ENCODE measurements at regions of chr4 and their contacts with region 1.

Region 1: DNA sequence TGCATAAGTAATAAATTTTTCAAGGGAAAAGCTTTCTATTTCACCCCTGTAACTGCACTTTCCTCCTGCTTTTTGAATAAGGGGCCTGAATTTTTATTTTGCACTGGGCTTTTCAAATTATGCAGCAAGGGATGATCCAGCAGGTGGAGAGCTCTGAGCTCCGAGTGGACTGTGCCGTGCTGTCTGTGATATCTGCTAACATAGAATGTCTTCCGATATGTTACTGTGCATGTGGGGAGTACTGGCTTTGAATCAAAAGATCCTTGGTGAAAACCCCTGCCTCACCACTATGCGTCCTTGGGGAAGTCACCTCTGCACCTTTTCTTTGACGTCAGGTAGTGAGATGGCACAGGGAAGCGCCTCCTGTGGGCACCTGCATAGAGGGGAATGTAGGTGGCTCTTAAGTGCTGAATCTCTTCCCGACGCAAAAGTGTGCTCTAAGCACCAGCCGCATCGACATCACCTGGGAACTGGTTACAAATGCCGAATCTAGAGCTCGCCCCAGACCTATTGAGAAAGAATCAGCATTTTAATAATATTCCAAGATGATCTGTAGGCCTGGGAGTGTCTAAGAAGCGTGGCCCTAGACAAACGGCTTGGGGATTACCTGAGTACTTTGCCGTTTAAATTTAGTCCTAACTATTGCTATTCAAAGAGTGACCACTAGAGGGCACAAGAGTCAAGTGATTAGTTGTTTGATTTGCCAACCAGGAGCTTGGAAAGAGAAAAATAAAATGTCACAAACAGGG is 19.2 kb upstream of the WFS1 start:
- DNase-seq: no peak
- ATAC-seq: peak in 3 of 4 donors; percentile 44 to 66 (median 64)
- H3K4me3 ChIP-seq: no peak overlapping the region
- H3K27ac ChIP-seq: no peak overlapping the region
- H3K4me1 ChIP-seq: no peaks in the 10 kb centered on the region
- H3K27me3 ChIP-seq: peaks cover 0 to 34% (median 7%) of the 10 kb centered on the region in 3 donors
- CTCF ChIP-seq: peak; percentile 87

Region 2: DNA sequence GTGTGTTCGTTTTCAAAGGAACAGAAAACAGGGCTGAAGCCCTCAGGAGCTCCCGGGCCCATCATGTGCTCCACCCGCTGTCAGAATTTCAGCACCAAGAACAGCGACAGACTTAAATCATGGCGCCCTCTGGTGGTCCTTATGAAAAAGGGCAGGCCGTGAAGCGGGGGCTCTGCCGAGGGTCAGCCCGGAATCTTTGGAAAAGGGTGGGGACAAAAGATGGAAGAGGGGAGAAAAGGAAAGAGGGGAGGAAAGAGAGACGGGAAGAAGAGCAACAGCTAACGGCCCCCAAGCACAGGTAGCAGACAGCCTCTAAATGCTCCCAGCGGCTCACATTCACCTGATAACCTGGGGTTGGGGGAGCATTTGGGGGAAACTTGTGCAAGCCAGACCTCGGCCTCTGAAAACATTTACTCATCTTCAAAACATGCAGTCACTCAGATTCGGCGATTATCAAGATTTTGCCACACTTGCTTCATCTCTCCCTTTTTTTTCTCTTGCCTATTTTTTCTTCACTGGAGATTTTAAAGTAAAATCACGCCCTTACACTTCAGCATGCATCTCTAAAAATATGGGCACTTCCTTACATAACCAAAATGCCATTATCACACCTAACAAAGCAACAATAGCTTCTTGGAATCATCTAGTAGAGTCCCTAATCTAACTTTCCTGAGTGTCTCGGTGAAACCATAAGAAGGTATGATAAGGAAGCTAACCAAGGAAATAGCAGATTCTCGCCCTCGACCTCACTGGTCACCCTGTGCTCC is 296.5 kb after region 1 on chr4:
- intact Hi-C with region 1: loop called in 1 of 2 experiments (anchors 5 kb)
- DNase-seq: no peak
- ATAC-seq: peak in 2 of 4 donors; percentile 37 to 53
- H3K4me3 ChIP-seq: no peak overlapping the region
- H3K27ac ChIP-seq: no peak overlapping the region
- H3K4me1 ChIP-seq: no peaks in the 10 kb centered on the region
- H3K27me3 ChIP-seq: peaks cover 0 to 24% (median 6%) of the 10 kb centered on the region in 3 donors
- CTCF ChIP-seq: peak; percentile 69

Measured in psoas muscle (tissue), 8 donors.